Lower lobe of right lung (tissue), 2 donors: ENCODE measurements at regions of chr7 and their contacts with region 1.

Region 1: GRCh38 chr7:29408841-29409243 is 154.8 kb upstream of the PRR15 start:
- DNase-seq: no peak
- ATAC-seq: peak; percentile 63 to 73
- H3K4me3 ChIP-seq: no peak overlapping the region
- H3K27ac ChIP-seq: no peak overlapping the region
- H3K4me1 ChIP-seq: no peaks in the 10 kb centered on the region
- H3K27me3 ChIP-seq: no peaks in the 10 kb centered on the region
- CTCF ChIP-seq: peak; percentile 85

Region 2: GRCh38 chr7:28921822-28922221 is 487.0 kb before region 1 on chr7:
- intact Hi-C with region 1: loop called (anchors 5 kb)
- DNase-seq: no peak
- ATAC-seq: peak; percentile 86 to 95
- H3K4me3 ChIP-seq: no peak overlapping the region
- H3K27ac ChIP-seq: no peak overlapping the region
- H3K4me1 ChIP-seq: peaks cover 18% of the 10 kb centered on the region
- H3K27me3 ChIP-seq: no peaks in the 10 kb centered on the region
- CTCF ChIP-seq: peak; percentile 86